HCT116 (cell line): ENCODE measurements at regions of chr6 and their contacts with region 1.

Region 1: GRCh38 chr6:36131511-36132245 is 1.4 kb downstream of the MAPK13 start:
- DNase-seq: no peak
- ATAC-seq: no peak
- H3K4me3 ChIP-seq: peak overlapping the region; percentile 66 to 75
- H3K27ac ChIP-seq: peak overlapping the region; percentile 82
- H3K4me1 ChIP-seq: peaks cover 30 to 54% of the 10 kb centered on the region in 2 experiments
- H3K27me3 ChIP-seq: no peaks in the 10 kb centered on the region
- CTCF ChIP-seq: no peak
- POLR2A ChIP-seq: no peak
- RAD21 ChIP-seq: no peak

Region 2: GRCh38 chr6:36196880-36197548 is 65.3 kb after region 1 on chr6:
- CTCF ChIA-PET with region 1: no interaction called
- POLR2A ChIA-PET with region 1: interaction called, 4 read pairs
- RAD21 ChIA-PET with region 1: no interaction called
- intact Hi-C with region 1: loop called (anchors 2 kb)
- DNase-seq: peak; percentile 91
- ATAC-seq: peak; percentile 94
- H3K4me3 ChIP-seq: peak overlapping the region; percentile 53 to 70
- H3K27ac ChIP-seq: peak overlapping the region; percentile 75
- H3K4me1 ChIP-seq: peaks cover 5 to 17% of the 10 kb centered on the region in 2 experiments; a peak in 3 of 4 replicates
- H3K27me3 ChIP-seq: no peaks in the 10 kb centered on the region
- CTCF ChIP-seq: no peak
- POLR2A ChIP-seq: no peak
- RAD21 ChIP-seq: no peak